ENCODE measurements at regions of chr7 and their contacts with region 1.

Region 1: GRCh38 chr7:90262438-90262837 is 17.5 kb downstream of the CFAP69 start:
- DNase-seq: no peak
- H3K4me3 ChIP-seq: no peak overlapping the region
- H3K27ac ChIP-seq: no peak overlapping the region
- H3K4me1 ChIP-seq: no peaks in the 10 kb centered on the region
- H3K27me3 ChIP-seq: no peaks in the 10 kb centered on the region
- CTCF ChIP-seq: peak; percentile 54

Region 2: GRCh38 chr7:90412458-90413184 is 150.2 kb after region 1 on chr7:
- intact Hi-C with region 1: loop called (anchors 5 kb)
- DNase-seq: peak; percentile 67
- H3K4me3 ChIP-seq: no peak overlapping the region
- H3K27ac ChIP-seq: peak overlapping the region; percentile 71
- H3K4me1 ChIP-seq: peaks cover 5% of the 10 kb centered on the region
- H3K27me3 ChIP-seq: no peaks in the 10 kb centered on the region
- CTCF ChIP-seq: peak; percentile 41

Region 3: DNA sequence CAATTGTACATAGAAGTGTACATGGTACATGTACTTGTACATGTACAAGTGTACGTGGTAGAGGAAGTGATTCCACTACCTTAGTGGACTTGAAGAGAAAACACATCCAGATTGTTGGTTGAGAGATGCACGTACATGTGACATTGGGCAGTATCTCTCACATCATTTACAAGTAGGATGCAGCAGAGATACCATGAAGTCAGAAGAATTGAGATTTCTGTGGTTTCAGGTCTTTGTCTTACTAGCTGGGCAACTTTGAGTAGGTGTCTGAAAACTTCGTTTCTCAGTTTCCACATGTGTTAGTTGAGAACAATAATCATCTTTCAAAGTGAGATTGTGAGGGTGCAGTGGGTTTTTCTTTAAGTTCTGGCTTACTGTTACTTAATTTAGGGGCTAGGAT is 162.3 kb after region 1 on chr7:
- intact Hi-C with region 1: loop called (anchors 5 kb)
- DNase-seq: no peak
- H3K4me3 ChIP-seq: no peak overlapping the region
- H3K27ac ChIP-seq: no peak overlapping the region
- H3K4me1 ChIP-seq: no peaks in the 10 kb centered on the region
- H3K27me3 ChIP-seq: no peaks in the 10 kb centered on the region
- CTCF ChIP-seq: no peak